ENCODE measurements at regions of chr11 and their contacts with region 1.

Region 1: DNA sequence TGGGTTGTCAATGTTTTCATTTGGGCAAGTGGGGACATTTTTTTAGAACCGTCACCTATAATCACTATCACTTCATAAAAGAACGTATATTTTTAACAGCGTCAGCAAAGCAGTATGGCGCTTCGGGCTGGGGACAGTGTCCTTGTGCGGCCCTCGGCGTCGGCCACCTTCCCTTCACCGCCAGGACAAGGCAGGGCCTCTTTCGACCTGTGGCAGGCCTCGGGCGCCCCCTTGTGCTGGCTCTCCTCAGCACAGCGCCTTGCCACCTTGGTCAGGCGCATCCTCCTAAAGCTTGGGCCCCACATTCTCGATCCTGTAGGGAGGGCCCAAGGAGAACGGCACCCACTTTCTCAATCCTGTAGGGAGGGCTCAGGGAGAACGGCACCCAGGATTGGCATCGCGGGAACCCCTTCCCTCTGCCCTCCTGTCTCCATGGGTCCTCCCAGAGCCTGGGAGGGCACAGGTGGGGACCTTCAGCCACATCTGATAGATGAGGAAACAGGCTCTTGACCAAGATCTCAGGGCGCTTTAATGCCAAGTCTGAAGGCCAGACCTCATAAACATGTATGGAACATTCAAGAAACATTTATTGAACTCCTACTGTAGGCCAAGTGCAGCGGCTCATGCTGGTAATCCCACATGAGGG is 11.5 kb upstream of the FADD start:
- DNase-seq: peak; percentile 90
- ATAC-seq: peak; percentile 93

Region 2: GRCh38 chr11:69683764-69684333 is 507.8 kb before region 1 on chr11:
- intact Hi-C with region 1: loop called (anchors 10 kb)
- DNase-seq: no peak
- ATAC-seq: no peak

Region 3: GRCh38 chr11:69918938-69919650 is 272.5 kb before region 1 on chr11:
- intact Hi-C with region 1: loop called (anchors 2 kb)
- DNase-seq: peak; percentile 91
- ATAC-seq: peak; percentile 79

Measured in left ventricle myocardium superior (tissue), 1 donor.